Upper lobe of right lung (tissue), 1 donor: ENCODE measurements at regions of chr16 and their contacts with region 1.

Region 1: GRCh38 chr16:67928561-67929364 is 2.9 kb downstream of the CTRL start:
- DNase-seq: peak; percentile 83
- ATAC-seq: peak; percentile 79
- H3K4me3 ChIP-seq: no peak overlapping the region
- H3K27ac ChIP-seq: no peak overlapping the region
- H3K4me1 ChIP-seq: peaks cover 10% of the 10 kb centered on the region
- H3K27me3 ChIP-seq: no peaks in the 10 kb centered on the region
- CTCF ChIP-seq: peak; percentile 82

Region 2: GRCh38 chr16:67672739-67673662 is 255.8 kb before region 1 on chr16:
- intact Hi-C with region 1: loop called (anchors 10 kb)
- DNase-seq: no peak
- ATAC-seq: peak; percentile 74
- H3K4me3 ChIP-seq: no peak overlapping the region
- H3K27ac ChIP-seq: peak overlapping the region; percentile 92
- H3K4me1 ChIP-seq: peaks cover 27% of the 10 kb centered on the region
- H3K27me3 ChIP-seq: no peaks in the 10 kb centered on the region
- CTCF ChIP-seq: peak; percentile 73

Region 3: GRCh38 chr16:67822511-67822910 is 106.3 kb before region 1 on chr16:
- intact Hi-C with region 1: loop called (anchors 10 kb)
- DNase-seq: no peak
- ATAC-seq: no peak
- H3K4me3 ChIP-seq: no peak overlapping the region
- H3K27ac ChIP-seq: no peak overlapping the region
- H3K4me1 ChIP-seq: no peaks in the 10 kb centered on the region
- H3K27me3 ChIP-seq: no peaks in the 10 kb centered on the region
- CTCF ChIP-seq: no peak

Region 4: DNA sequence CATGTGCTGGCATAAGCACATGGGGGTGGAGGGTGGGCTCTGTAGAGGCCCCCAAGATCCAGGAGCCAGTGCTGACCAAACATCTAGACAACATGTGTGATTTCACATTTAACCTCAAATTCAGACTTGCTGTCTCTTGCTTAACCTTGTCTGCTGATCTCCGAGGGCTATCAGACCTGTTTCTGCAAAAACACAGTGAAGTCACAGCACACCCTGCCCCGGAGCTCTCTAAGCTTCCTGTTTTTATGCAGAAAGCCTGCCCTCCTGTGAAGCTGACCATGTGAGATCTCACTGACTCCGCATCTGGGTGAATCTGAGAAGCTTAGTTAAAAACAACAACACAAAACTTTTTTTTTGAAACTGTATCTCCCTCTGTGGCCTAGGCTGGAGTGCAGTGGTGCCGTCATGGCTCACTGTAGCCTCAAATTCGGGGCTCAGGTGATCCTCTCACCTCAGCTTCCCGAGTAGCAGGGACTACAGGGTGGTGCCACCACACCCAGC is 77.1 kb after region 1 on chr16:
- intact Hi-C with region 1: no loop called
- DNase-seq: peak; percentile 70
- ATAC-seq: peak; percentile 96
- H3K4me3 ChIP-seq: no peak overlapping the region
- H3K27ac ChIP-seq: peak overlapping the region; percentile 83
- H3K4me1 ChIP-seq: peaks cover 22% of the 10 kb centered on the region
- H3K27me3 ChIP-seq: no peaks in the 10 kb centered on the region
- CTCF ChIP-seq: no peak